Right cardiac atrium (tissue), 5 donors: ENCODE measurements at regions of chr7 and their contacts with region 1.

Region 1: DNA sequence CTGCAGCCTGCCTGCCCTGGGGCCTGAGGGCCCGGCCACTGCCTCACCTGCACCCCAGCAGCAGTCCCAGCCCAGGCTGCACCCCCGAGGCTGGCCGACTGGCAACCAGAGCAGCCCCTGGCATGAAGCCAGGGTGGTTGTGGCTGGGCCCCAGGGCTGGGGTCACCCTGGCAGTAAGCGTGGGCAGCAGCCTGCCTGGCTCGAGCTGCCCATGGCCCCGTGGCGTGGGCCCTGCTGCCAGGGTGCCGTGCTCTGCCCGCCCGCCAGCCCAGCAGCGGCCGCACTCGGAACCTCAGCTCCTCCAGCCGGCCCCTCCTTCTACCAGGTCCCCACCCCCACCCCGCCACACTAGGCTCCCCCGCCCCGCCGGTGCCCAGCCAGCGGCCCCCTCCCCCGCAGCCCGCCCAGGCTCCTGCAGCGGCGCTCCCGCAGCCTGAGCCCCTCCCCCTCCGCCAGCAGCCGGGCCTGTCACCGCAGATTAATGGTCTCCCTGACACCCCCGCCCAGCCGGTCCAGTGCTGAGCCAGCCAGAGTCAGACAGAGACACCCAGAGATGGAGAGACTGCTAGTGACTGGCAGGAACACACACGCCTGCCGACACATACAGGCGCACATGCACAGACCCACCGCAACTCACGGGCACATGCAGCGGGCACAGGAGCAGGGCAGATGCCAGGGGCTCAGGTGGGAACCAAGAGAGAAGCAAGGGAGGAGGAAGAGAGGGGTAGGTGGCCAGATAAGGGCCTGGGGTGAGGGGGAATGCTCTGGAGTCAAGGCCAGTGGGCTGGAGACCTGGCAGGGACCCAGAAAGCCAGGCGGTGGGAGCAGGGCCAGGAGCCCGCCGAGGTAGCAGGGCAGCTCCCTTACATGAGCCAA is 22.4 kb downstream of the KCNH2 start:
- DNase-seq: peak; percentile 63 to 91 (median 87)
- ATAC-seq: peak; percentile 55 to 56
- H3K4me3 ChIP-seq: no peak overlapping the region
- H3K27ac ChIP-seq: peak overlapping the region; percentile 68
- H3K4me1 ChIP-seq: peaks cover 10% of the 10 kb centered on the region
- H3K27me3 ChIP-seq: no peaks in the 10 kb centered on the region

Region 2: GRCh38 chr7:150322833-150323681 is 632.7 kb before region 1 on chr7 and contains the starts of genes ACTR3C and LRRC61:
- intact Hi-C with region 1: no loop called
- DNase-seq: peak in 2 of 3 donors; percentile 80 to 84
- ATAC-seq: peak; percentile 72 to 79
- H3K4me3 ChIP-seq: peak within 1 kb of the TSS; percentile 46
- H3K27ac ChIP-seq: no peak within 1 kb of the TSS
- H3K4me1 ChIP-seq: peaks cover 2% of the 10 kb centered on the region
- H3K27me3 ChIP-seq: no peaks in the 10 kb centered on the region
- total RNA-seq, gene ACTR3C: 4.5 to 7.4 (median 5.5) TPM
- total RNA-seq, gene LRRC61: 5.7 to 8.0 (median 6.2) TPM

Region 3: DNA sequence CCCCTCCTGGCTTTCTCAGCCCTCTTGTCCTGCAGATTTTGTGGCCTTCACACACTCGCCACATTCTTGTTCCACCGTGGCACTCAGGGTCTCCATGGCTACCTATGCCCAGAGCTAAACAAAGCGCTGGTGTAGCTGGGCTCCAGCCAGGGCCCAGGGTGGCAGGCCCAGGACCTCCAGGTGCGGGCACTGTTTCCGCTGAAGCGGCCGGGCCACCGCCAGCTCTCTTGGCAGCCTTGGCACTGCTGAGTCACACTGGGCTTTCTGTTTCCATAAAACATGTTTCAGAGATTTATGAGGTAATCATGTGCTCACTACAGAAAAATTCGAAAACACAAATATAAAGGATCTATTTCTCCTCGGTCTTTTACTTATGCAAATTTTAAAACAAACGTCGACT is 52.2 kb before region 1 on chr7:
- intact Hi-C with region 1: loop called in 1 of 4 experiments (anchors 10 kb)
- DNase-seq: peak; percentile 72 to 88 (median 86)
- ATAC-seq: peak; percentile 88 to 90
- H3K4me3 ChIP-seq: no peak overlapping the region
- H3K27ac ChIP-seq: peak overlapping the region; percentile 5
- H3K4me1 ChIP-seq: peaks cover 3% of the 10 kb centered on the region
- H3K27me3 ChIP-seq: no peaks in the 10 kb centered on the region

Region 4: DNA sequence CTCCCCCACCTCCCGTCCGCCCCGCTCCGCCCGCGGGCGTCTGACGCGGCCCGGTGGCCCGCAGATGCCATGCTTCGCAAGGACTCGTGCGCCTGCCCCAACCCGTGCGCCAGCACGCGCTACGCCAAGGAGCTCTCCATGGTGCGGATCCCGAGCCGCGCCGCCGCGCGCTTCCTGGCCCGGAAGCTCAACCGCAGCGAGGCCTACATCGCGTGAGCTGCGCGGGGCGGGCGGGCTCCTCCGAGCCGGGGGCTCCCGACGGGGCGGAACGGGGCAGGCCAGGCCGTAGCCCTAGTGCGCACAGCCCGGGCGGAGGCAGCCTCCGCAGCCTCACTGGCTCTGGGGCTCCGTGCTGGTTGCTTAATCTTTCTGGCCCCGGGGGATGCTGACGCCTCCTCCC is 95.4 kb after region 1 on chr7:
- intact Hi-C with region 1: no loop called
- DNase-seq: peak; percentile 63 to 88 (median 84)
- ATAC-seq: peak; percentile 56
- H3K4me3 ChIP-seq: no peak overlapping the region
- H3K27ac ChIP-seq: no peak overlapping the region
- H3K4me1 ChIP-seq: no peaks in the 10 kb centered on the region
- H3K27me3 ChIP-seq: no peaks in the 10 kb centered on the region

Region 5: GRCh38 chr7:151172273-151173141 is 216.8 kb after region 1 on chr7:
- intact Hi-C with region 1: no loop called
- DNase-seq: peak; percentile 76 to 92 (median 92)
- ATAC-seq: peak; percentile 57 to 66
- H3K4me3 ChIP-seq: no peak overlapping the region
- H3K27ac ChIP-seq: no peak overlapping the region
- H3K4me1 ChIP-seq: peaks cover 3% of the 10 kb centered on the region
- H3K27me3 ChIP-seq: no peaks in the 10 kb centered on the region